Activated CD4-positive, alpha-beta T cell treated with anti-CD3 and anti-CD28 coated beads for 36 hours (primary cell): ENCODE measurements at regions of chr1 and their contacts with region 1.

Region 1: GRCh38 chr1:23484253-23485001 is 448 bp upstream of the ASAP3 start:
- DNase-seq: peak; percentile 95
- ATAC-seq: peak; percentile 94
- H3K4me3 Mint-ChIP-seq: peak overlapping the region; percentile 79
- H3K27ac Mint-ChIP-seq: peak overlapping the region; percentile 33
- H3K4me1 Mint-ChIP-seq: peaks cover 20% of the 10 kb centered on the region
- H3K27me3 Mint-ChIP-seq: peaks cover 18% of the 10 kb centered on the region

Region 2: DNA sequence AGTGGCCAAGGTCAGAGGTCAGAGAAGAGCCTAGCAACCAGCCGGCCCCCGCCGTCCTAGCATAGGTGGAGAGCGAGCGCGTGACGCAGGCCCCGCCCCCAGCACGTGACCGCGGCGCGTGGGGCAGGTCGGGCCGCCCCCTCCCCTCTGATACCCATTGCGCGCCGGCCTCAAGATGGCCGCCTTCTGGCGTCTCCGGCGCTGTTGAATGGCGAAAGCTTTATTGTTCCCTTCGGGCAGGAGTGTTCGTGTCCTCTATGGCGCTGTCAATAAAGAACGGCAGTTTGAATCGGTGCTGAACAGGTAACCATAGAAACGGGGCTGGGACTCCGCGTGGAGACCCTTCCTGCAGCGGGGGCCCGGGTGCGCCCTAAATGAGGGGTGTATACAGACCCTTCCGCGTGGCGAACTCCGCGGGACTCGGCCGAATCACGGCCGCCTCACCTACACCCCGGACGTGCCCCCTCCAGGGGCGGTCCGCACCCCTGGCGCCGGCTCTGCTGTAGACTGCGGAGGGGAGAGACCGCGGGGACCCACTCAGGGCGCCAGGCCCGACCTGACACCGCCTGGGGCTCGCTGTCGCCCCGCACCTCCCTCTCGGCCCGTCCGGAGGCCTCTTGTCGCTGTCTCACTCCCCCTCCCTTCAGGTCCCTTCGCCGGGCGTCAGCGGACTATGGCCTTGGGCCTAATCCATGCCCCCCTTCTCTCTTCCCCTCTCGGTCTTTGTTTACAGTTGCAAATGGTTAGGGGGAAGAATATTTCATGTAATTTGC is 1032.5 kb before region 1 on chr1 and contains the start of gene ZBTB40:
- CTCF ChIA-PET with region 1: no interaction called
- POLR2A ChIA-PET with region 1: no interaction called
- intact Hi-C with region 1: loop called in 1 of 2 experiments (anchors 10 kb)
- DNase-seq: peak; percentile 98
- ATAC-seq: peak; percentile 97
- H3K4me3 Mint-ChIP-seq: peak within 1 kb of the TSS; percentile 94
- H3K27ac Mint-ChIP-seq: peak within 1 kb of the TSS; percentile 90
- H3K4me1 Mint-ChIP-seq: peaks cover 41% of the 10 kb centered on the region
- H3K27me3 Mint-ChIP-seq: no peaks in the 10 kb centered on the region
- total RNA-seq, gene ZBTB40: 12.7 to 13.5 TPM

Region 3: GRCh38 chr1:23422241-23423030 is 62.0 kb before region 1 on chr1:
- CTCF ChIA-PET with region 1: interaction called, 4 read pairs
- POLR2A ChIA-PET with region 1: no interaction called
- intact Hi-C with region 1: loop called in 1 of 2 experiments (anchors 1 kb)
- DNase-seq: peak; percentile 68
- ATAC-seq: peak; percentile 79
- H3K4me3 Mint-ChIP-seq: no peak overlapping the region
- H3K27ac Mint-ChIP-seq: peak overlapping the region; percentile 22
- H3K4me1 Mint-ChIP-seq: peaks cover 22% of the 10 kb centered on the region
- H3K27me3 Mint-ChIP-seq: peaks cover 2% of the 10 kb centered on the region

Region 4: GRCh38 chr1:23444104-23444533 is 40.3 kb before region 1 on chr1:
- CTCF ChIA-PET with region 1: no interaction called
- POLR2A ChIA-PET with region 1: no interaction called
- intact Hi-C with region 1: no loop called
- DNase-seq: no peak
- ATAC-seq: no peak
- H3K4me3 Mint-ChIP-seq: no peak overlapping the region
- H3K27ac Mint-ChIP-seq: no peak overlapping the region
- H3K4me1 Mint-ChIP-seq: no peaks in the 10 kb centered on the region
- H3K27me3 Mint-ChIP-seq: no peaks in the 10 kb centered on the region

Region 5: GRCh38 chr1:23514111-23514679 is 29.8 kb after region 1 on chr1:
- CTCF ChIA-PET with region 1: no interaction called
- POLR2A ChIA-PET with region 1: no interaction called
- intact Hi-C with region 1: no loop called
- DNase-seq: no peak
- ATAC-seq: no peak
- H3K4me3 Mint-ChIP-seq: no peak overlapping the region
- H3K27ac Mint-ChIP-seq: no peak overlapping the region
- H3K4me1 Mint-ChIP-seq: no peaks in the 10 kb centered on the region
- H3K27me3 Mint-ChIP-seq: no peaks in the 10 kb centered on the region

Region 6: GRCh38 chr1:23530747-23531561 is 46.5 kb after region 1 on chr1 and contains the start of gene E2F2:
- CTCF ChIA-PET with region 1: interaction called, 5 read pairs
- POLR2A ChIA-PET with region 1: interaction called, 3 read pairs
- intact Hi-C with region 1: loop called in 1 of 2 experiments (anchors 1 kb)
- DNase-seq: peak; percentile 91
- ATAC-seq: peak; percentile 81
- H3K4me3 Mint-ChIP-seq: peak within 1 kb of the TSS; percentile 84
- H3K27ac Mint-ChIP-seq: peak within 1 kb of the TSS; percentile 95
- H3K4me1 Mint-ChIP-seq: peaks cover 68% of the 10 kb centered on the region
- H3K27me3 Mint-ChIP-seq: no peaks in the 10 kb centered on the region
- total RNA-seq, gene E2F2: 25.0 to 32.0 TPM

Region 7: DNA sequence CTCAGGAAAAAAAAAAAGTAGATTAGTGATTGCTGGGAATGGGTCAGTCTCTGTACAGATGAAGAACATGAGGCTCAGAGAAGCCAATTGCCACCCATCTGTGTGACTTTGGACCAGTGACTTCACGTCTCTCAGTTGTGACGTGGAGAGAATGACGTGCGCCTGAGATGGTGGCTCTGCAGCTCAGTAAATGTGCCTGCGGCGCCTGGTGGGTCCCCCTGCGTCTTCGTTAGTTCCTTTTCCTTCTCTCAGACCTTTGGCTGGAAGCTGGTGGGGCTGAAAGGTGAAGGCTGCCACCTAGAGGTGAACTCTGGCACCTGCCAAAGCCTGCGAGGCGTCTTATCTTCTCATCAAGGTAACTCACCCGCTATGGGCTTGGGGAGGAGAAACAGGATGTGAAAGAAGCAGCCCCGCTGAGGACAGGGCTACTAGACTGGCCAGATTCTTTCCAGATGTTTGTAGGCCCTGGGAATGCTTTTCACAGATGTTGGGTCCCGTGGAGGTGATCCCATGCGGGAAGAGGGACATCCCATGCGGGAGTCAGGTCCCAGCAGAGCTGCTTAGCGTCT is 55.4 kb after region 1 on chr1:
- CTCF ChIA-PET with region 1: interaction called, 7 read pairs
- POLR2A ChIA-PET with region 1: interaction called, 5 read pairs
- intact Hi-C with region 1: loop called in 1 of 2 experiments (anchors 1 kb)
- DNase-seq: peak; percentile 95
- ATAC-seq: peak; percentile 95
- H3K4me3 Mint-ChIP-seq: peak overlapping the region; percentile 18
- H3K27ac Mint-ChIP-seq: peak overlapping the region; percentile 61
- H3K4me1 Mint-ChIP-seq: peaks cover 13% of the 10 kb centered on the region
- H3K27me3 Mint-ChIP-seq: no peaks in the 10 kb centered on the region

Region 8: GRCh38 chr1:23838401-23838866 is 354.0 kb after region 1 on chr1:
- CTCF ChIA-PET with region 1: no interaction called
- POLR2A ChIA-PET with region 1: no interaction called
- intact Hi-C with region 1: loop called in 1 of 2 experiments (anchors 1 kb)
- DNase-seq: peak; percentile 84
- ATAC-seq: peak; percentile 98
- H3K4me3 Mint-ChIP-seq: peak overlapping the region; percentile 45
- H3K27ac Mint-ChIP-seq: no peak overlapping the region
- H3K4me1 Mint-ChIP-seq: peaks cover 5% of the 10 kb centered on the region
- H3K27me3 Mint-ChIP-seq: peaks cover 5% of the 10 kb centered on the region